PC-3 (cell line): ENCODE measurements at regions of chr4 and their contacts with region 1.

Region 1: GRCh38 chr4:142095886-142096605 is 459.7 kb downstream of the IL15 start:
- DNase-seq: peak; percentile 98
- ATAC-seq: peak; percentile 86
- H3K4me3 ChIP-seq: no peak overlapping the region
- H3K27ac ChIP-seq: peak overlapping the region; percentile 71
- H3K4me1 ChIP-seq: peaks cover 33% of the 10 kb centered on the region
- H3K27me3 ChIP-seq: no peaks in the 10 kb centered on the region
- CTCF ChIP-seq: no peak

Region 2: GRCh38 chr4:141860974-141861373 is 235.1 kb before region 1 on chr4:
- CTCF ChIA-PET with region 1: no interaction called
- POLR2A ChIA-PET with region 1: no interaction called
- intact Hi-C with region 1: loop called (anchors 10 kb)
- DNase-seq: peak; percentile 61
- ATAC-seq: peak; percentile 45
- H3K4me3 ChIP-seq: no peak overlapping the region
- H3K27ac ChIP-seq: no peak overlapping the region
- H3K4me1 ChIP-seq: peaks cover 20% of the 10 kb centered on the region
- H3K27me3 ChIP-seq: no peaks in the 10 kb centered on the region
- CTCF ChIP-seq: peak; percentile 81

Region 3: GRCh38 chr4:142142366-142143054 is 46.5 kb after region 1 on chr4:
- CTCF ChIA-PET with region 1: no interaction called
- POLR2A ChIA-PET with region 1: no interaction called
- intact Hi-C with region 1: no loop called
- DNase-seq: peak; percentile 31
- ATAC-seq: peak; percentile 32; the same call in 1 of the 2 replicates
- H3K4me3 ChIP-seq: no peak overlapping the region
- H3K27ac ChIP-seq: peak overlapping the region; percentile 20
- H3K4me1 ChIP-seq: peaks cover 39% of the 10 kb centered on the region
- H3K27me3 ChIP-seq: no peaks in the 10 kb centered on the region
- CTCF ChIP-seq: no peak

Region 4: GRCh38 chr4:142265536-142265935 is 169.5 kb after region 1 on chr4:
- CTCF ChIA-PET with region 1: no interaction called
- POLR2A ChIA-PET with region 1: no interaction called
- intact Hi-C with region 1: no loop called
- DNase-seq: peak; percentile 93
- ATAC-seq: peak; percentile 96
- H3K4me3 ChIP-seq: peak overlapping the region; percentile 26; the same call in 1 of the 2 replicates
- H3K27ac ChIP-seq: peak overlapping the region; percentile 88
- H3K4me1 ChIP-seq: peaks cover 31% of the 10 kb centered on the region
- H3K27me3 ChIP-seq: no peaks in the 10 kb centered on the region
- CTCF ChIP-seq: no peak